ENCODE measurements at regions of chr2 and their contacts with region 1.

Region 1: DNA sequence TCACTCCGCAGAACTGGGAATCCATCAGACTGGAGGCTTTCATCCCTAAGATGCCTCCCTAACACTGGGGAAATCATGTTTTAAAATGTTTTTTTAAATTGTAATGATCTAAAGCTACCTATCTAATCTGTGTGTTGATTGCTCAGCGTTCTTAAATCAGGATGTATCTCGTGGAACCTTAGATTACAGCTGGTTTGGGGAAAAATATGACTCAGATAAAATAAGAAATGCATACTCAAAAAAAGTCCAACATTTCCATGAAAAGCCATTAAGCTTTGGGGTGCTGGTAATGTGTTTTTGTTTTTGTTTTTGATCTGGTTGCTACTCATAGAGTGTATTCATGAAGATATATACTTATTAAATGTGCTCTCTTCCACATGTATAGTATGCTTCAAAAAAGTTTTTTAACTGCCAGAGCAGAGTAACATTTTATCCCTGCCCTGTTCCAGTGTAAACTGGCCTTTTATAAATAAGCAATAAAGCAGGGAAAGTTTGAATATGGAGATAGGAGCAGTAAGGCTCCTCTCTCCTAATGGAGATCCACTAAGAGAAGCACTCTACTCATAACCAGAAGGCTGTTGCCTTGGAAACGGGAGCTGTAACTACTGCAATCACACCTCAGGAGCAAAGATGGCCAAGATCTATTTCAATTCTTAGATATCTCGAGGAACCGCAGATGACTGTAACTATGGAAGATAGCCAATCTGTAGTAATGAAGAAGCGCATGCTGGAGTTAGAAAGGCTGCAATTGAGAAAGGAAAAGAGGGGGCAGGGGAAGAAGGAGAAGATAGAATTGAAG is 41.6 kb downstream of the ANKRD44 start:
- DNase-seq: peak; percentile 63
- H3K4me3 Mint-ChIP-seq: no peak overlapping the region
- H3K27ac Mint-ChIP-seq: peak overlapping the region; percentile 74
- H3K4me1 Mint-ChIP-seq: peaks cover 89% of the 10 kb centered on the region
- H3K27me3 Mint-ChIP-seq: no peaks in the 10 kb centered on the region

Region 2: GRCh38 chr2:196798980-196799379 is 470.0 kb before region 1 on chr2:
- CTCF ChIA-PET with region 1: no interaction called
- POLR2A ChIA-PET with region 1: no interaction called
- intact Hi-C with region 1: no loop called
- DNase-seq: no peak
- H3K4me3 Mint-ChIP-seq: peak overlapping the region; percentile 94
- H3K27ac Mint-ChIP-seq: peak overlapping the region; percentile 83
- H3K4me1 Mint-ChIP-seq: peaks cover 41% of the 10 kb centered on the region
- H3K27me3 Mint-ChIP-seq: peaks cover 5% of the 10 kb centered on the region

Region 3: GRCh38 chr2:197028230-197028629 is 240.8 kb before region 1 on chr2:
- CTCF ChIA-PET with region 1: no interaction called
- POLR2A ChIA-PET with region 1: no interaction called
- intact Hi-C with region 1: no loop called
- DNase-seq: no peak
- H3K4me3 Mint-ChIP-seq: no peak overlapping the region
- H3K27ac Mint-ChIP-seq: peak overlapping the region; percentile 7
- H3K4me1 Mint-ChIP-seq: peaks cover 12% of the 10 kb centered on the region
- H3K27me3 Mint-ChIP-seq: no peaks in the 10 kb centered on the region

Region 4: GRCh38 chr2:197279997-197280746 is 11.2 kb after region 1 on chr2:
- CTCF ChIA-PET with region 1: no interaction called
- POLR2A ChIA-PET with region 1: interaction called, 5 read pairs
- intact Hi-C with region 1: loop called (anchors 1 kb)
- DNase-seq: no peak
- H3K4me3 Mint-ChIP-seq: peak overlapping the region; percentile 20
- H3K27ac Mint-ChIP-seq: peak overlapping the region; percentile 72
- H3K4me1 Mint-ChIP-seq: peaks cover 75% of the 10 kb centered on the region
- H3K27me3 Mint-ChIP-seq: no peaks in the 10 kb centered on the region

Region 5: GRCh38 chr2:197286805-197287598 is 18.0 kb after region 1 on chr2:
- CTCF ChIA-PET with region 1: interaction called, 4 read pairs
- POLR2A ChIA-PET with region 1: no interaction called
- intact Hi-C with region 1: loop called (anchors 1 kb)
- DNase-seq: peak; percentile 64
- H3K4me3 Mint-ChIP-seq: peak overlapping the region; percentile 73
- H3K27ac Mint-ChIP-seq: peak overlapping the region; percentile 95
- H3K4me1 Mint-ChIP-seq: peaks cover 78% of the 10 kb centered on the region
- H3K27me3 Mint-ChIP-seq: no peaks in the 10 kb centered on the region

Region 6: DNA sequence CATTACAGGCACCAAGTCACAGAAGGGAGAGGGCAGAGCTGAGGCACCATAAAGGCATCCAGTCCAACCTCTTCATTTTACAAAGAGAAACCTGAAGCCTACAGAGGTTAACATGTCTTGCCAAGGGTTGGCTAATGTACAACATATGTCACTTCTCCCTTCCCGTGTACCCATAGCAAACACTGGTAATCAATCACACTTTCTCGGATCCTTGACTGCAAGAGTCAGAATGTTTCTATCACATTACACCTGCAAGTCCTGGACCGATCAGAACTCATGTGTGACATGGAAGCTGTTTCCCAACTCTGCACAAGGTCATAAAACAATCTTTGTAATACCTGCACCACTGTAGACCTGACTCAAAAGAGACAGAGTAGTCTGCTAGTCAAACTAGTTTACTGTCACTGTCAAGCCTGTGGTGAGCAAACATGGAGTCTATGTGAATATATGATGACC is 35.6 kb after region 1 on chr2:
- CTCF ChIA-PET with region 1: interaction called, 3 read pairs
- POLR2A ChIA-PET with region 1: interaction called, 13 read pairs
- intact Hi-C with region 1: loop called (anchors 1 kb)
- DNase-seq: peak; percentile 62
- H3K4me3 Mint-ChIP-seq: peak overlapping the region; percentile 95
- H3K27ac Mint-ChIP-seq: peak overlapping the region; percentile 99
- H3K4me1 Mint-ChIP-seq: peaks cover 83% of the 10 kb centered on the region
- H3K27me3 Mint-ChIP-seq: no peaks in the 10 kb centered on the region